Mucosa of descending colon (tissue), 3 donors: ENCODE measurements at regions of chr20 and their contacts with region 1.

Region 1: DNA sequence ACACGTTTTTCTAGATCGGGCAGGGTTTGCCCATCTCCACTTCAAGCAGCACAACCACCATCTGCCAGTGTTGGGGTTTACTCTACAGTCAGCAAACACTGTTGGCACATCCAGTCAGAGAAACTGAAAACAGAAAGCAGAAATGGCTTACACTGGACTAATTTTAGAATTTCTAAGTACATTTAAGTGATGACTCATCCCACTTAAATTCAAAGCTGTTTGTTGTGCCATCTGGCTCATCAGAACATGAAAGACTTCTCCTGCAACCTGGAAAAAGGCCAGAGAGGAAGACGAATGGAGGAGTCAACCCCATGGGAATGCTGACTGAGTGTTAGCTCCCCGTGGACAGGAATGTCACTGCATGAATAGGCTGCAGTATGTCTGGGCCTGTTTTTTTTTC is 21.8 kb downstream of the FAM209B start:
- DNase-seq: peak in 1 of 3 donors; percentile 20
- ATAC-seq: peak; percentile 74
- H3K4me3 ChIP-seq: no peak overlapping the region
- H3K4me1 ChIP-seq: no peaks in the 10 kb centered on the region
- CTCF ChIP-seq: no peak

Region 2: GRCh38 chr20:57061058-57061900 is 506.4 kb after region 1 on chr20:
- intact Hi-C with region 1: loop called in 1 of 2 experiments (anchors 10 kb)
- DNase-seq: peak in 1 of 3 donors; percentile 11
- ATAC-seq: no peak
- H3K4me3 ChIP-seq: no peak overlapping the region
- H3K4me1 ChIP-seq: no peaks in the 10 kb centered on the region
- CTCF ChIP-seq: no peak